ENCODE measurements at regions of chr5 and their contacts with region 1.

Region 1: DNA sequence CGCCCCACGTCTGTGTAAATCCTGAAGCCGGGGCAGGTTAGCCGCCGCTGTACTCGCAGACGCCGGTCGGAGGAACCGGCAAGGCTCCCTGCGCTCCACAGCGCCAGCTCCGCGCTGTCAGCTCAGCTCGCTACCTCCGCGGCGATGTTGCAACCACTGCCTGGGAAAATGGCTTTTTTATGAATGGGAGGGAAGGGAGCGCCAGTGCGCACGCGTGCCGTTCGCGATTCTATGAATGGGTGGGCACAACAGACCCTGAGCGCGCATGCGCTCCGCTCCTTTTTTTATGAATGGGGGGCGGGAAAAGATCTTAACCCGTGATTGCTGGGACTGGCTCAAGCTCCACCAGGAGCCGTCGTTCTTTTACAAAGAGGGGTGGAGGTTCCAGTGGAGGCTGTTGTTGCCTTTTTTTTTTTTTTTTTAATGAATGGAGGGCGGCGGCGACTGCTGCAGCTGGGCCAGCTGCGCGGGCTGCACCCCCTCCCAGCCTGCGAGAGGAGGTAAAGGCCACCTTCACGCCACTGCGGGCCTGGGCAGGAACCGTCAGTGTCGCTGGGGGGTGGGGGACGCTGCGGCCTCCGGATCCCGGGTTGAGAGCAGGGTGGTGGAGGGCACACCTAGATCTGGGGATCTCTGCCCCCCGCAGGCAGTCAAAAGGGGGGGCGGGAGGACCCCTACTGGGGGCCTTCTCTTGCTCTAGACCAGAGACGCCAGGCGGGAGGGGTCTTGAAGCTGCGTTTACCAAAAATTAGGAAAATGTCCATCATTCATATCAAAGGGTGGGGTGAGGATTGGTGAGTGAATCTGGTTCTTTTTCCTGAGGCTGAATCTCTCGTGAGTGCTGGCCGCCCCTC is at the start of gene SPRY4:
- DNase-seq: peak; percentile 90
- ATAC-seq: peak; percentile 71
- H3K4me3 ChIP-seq: peak within 1 kb of the TSS; percentile 62
- H3K27ac ChIP-seq: 0 out of 2 replicates have a peak within 1 kb of the TSS, but pooled peaks have one; percentile 27
- H3K4me1 ChIP-seq: no peaks in the 10 kb centered on the region; the same call in 1 of the 2 replicates
- H3K27me3 ChIP-seq: peaks cover 0 to 4% of the 10 kb centered on the region in 2 experiments; a peak in 1 of 4 replicates
- CTCF ChIP-seq: peak in 2 of 3 experiments; percentile 2 to 8; a peak in 1 of 6 replicates
- EP300 ChIP-seq: 0 out of 4 replicates have a peak, but pooled peaks of 1 of the 2 experiments have one; percentile 17
- POLR2A ChIP-seq: peak; percentile 70
- RAD21 ChIP-seq: no peak
- polyA plus RNA-seq, gene SPRY4: 0.04 TPM in 1 of 2 experiments, not detected in the other

Region 2: GRCh38 chr5:142221091-142221860 is 103.8 kb before region 1 on chr5:
- CTCF ChIA-PET with region 1: interaction called, 3 read pairs
- POLR2A ChIA-PET with region 1: no interaction called
- RAD21 ChIA-PET with region 1: interaction called, 10 read pairs
- SMC1A ChIA-PET with region 1: no interaction called
- in situ Hi-C with region 1: no loop called
- intact Hi-C with region 1: loop called (anchors 5 kb)
- DNase-seq: no peak
- ATAC-seq: no peak
- H3K4me3 ChIP-seq: no peak overlapping the region
- H3K27ac ChIP-seq: no peak overlapping the region
- H3K4me1 ChIP-seq: peaks cover 13% of the 10 kb centered on the region
- H3K27me3 ChIP-seq: peaks cover 0 to 2% of the 10 kb centered on the region in 2 experiments; a peak in 2 of 4 replicates
- CTCF ChIP-seq: no peak
- EP300 ChIP-seq: no peak
- POLR2A ChIP-seq: no peak
- RAD21 ChIP-seq: no peak

Region 3: DNA sequence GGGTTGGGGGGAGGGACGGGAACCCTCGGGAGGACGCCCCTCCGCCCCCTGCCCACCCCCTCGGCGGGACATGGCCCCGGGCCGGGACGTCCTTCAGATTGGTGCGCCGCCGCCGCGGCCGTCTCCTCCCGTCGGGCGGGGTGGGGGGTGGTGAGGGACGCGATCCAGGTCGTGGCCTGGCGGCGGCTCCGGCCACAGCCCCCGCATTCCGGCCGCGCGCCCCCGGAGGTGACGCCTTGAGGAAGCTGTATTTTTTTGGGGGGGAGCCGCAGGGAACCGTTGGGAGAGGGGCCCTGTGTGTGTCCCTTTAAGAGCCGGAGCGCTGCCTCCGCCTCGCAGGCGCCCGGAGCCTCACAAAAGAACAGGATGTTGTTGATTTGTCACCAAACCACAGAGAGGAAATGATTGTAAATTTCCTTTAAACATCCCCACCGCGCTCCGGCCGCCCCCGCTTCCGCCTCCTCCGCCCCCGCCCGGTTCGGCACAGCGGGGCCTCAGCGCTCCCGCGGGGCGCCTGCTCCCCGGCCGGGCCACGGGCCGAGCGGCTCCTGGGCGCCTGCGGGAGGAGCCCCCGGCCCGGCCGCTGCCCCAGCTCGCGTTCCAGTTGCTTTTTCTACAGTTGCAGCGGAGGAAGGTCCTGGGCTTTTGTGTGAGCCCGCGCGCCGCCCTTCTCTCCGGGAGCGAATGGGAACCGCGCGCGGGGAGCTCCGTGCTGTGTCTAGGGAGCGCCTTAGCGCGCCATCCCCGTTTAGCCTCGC is 31.8 kb after region 1 on chr5:
- CTCF ChIA-PET with region 1: interaction called, 4 read pairs
- POLR2A ChIA-PET with region 1: interaction called, 6 read pairs
- RAD21 ChIA-PET with region 1: interaction called, 14 read pairs
- SMC1A ChIA-PET with region 1: interaction called, 6 read pairs
- in situ Hi-C with region 1: no loop called
- intact Hi-C with region 1: no loop called
- DNase-seq: peak; percentile 48
- ATAC-seq: peak; percentile 93
- H3K4me3 ChIP-seq: peak overlapping the region; percentile 87
- H3K27ac ChIP-seq: peak overlapping the region; percentile 47
- H3K4me1 ChIP-seq: peaks cover 3% of the 10 kb centered on the region
- H3K27me3 ChIP-seq: no peaks in the 10 kb centered on the region
- CTCF ChIP-seq: no peak
- EP300 ChIP-seq: peak; percentile 53 to 58
- POLR2A ChIP-seq: peak; percentile 59
- RAD21 ChIP-seq: no peak